Posterior vena cava (tissue), 2 donors: ENCODE measurements at regions of chr11 and their contacts with region 1.

Region 1: DNA sequence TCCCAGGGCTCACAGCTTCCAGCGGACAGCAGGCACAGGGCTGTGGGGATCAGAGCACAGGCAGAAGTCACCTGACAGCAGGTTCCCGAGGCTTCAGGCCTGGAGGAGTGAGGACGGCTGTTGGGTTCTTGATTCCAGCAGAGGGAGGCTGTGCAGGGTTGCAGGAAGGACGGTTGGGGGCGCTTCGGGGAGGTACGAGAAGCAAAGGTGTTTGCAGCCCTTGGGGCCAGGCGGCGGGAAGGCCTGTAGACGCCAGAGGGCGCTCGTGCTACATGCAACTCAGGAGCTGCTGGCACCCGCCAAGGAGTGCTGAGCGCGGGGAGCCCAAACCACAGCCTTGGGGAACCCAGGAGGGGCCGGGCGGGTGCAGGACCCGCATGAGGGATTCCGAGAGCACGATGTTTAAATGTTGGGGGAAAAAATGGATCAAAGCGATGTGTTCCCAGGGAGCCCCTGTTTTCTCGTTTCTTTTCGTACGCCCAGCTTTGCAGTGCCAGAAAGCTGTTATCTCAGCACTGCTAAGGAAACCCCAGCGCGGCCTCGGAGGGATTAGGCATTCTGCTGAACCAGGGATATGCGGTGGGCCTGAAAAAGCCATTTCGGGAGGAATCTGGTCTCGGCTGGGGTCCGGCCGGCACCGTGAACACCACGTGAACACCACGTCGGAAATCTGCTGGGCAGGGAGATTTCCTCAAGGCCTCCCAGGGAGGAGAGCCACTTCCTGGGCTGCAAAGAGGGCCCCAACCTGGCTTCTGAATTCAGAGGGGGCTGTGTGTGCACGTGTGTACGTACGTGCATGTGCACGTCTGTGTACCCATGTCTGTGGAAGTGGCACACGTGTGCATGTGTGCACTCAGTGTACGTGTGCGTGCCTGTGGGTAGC is 88.1 kb downstream of the KCNQ1 start:
- DNase-seq: peak; percentile 97

Region 2: DNA sequence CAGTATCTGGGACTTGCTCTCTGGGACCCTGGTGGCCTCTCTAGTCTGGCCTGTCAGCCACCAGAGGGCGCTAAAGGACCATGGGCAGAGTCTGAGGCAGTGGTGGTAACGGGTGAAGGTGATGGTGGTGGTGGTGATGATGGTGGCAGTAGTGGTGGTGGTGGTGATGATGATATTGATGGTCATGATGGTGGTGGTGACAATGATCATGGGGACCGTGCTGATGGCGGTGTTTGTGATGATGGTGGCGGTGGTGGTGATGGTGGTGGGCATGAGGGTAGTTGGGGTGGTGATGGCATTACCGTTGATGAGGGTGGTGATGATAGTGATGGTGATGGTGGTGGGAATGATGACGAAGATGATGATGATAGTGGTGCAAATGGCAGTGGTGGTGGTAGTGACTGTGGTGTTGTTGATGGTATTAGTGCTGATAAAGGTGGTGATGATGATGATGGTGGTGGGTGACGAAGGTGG is 104.6 kb before region 1 on chr11:
- intact Hi-C with region 1: loop called in 1 of 2 experiments (anchors 5 kb)
- DNase-seq: peak; percentile 92

Region 3: DNA sequence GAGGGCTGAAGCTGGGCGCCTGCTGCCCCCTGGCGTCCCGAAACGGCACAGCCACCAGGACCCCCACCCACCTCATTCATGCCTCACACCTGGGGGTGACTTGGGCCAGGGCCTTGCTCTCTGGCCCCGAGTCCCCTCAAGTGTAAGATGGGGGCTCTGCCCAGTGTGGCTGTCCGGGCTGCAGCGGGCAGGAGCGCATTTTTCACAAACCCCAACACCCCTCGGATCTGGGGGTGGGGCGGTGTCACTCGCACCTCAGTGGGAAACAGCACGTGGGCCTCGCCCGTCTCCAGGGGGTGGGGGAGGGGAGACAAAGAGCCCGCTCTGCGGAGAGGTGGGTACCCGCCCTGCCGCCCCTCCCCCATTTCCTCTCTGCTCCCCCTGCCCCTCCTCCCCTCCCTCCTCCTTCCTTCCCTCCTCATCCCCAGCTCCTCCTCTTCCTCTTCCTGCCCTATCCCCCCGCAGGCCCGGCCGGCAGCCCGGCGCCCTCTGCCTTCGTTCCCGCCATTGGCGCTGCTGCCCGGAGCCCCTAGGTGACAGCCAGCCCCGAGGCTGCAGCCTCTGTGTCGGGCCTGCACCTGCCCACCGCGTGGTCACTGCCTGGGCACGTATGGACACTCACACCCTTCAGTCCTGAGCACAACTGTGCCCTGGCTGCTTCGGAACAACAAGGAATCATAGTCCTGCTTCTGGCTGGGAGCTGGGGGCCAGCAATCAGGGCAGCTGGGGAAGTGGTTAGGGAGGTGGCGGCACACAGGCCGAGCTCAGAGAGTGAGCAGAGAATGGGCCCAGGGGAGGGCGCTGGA is 359.5 kb after region 1 on chr11:
- intact Hi-C with region 1: loop called (anchors 2 kb)
- DNase-seq: no peak